ENCODE measurements at regions of chr1 and their contacts with region 1.

Region 1: DNA sequence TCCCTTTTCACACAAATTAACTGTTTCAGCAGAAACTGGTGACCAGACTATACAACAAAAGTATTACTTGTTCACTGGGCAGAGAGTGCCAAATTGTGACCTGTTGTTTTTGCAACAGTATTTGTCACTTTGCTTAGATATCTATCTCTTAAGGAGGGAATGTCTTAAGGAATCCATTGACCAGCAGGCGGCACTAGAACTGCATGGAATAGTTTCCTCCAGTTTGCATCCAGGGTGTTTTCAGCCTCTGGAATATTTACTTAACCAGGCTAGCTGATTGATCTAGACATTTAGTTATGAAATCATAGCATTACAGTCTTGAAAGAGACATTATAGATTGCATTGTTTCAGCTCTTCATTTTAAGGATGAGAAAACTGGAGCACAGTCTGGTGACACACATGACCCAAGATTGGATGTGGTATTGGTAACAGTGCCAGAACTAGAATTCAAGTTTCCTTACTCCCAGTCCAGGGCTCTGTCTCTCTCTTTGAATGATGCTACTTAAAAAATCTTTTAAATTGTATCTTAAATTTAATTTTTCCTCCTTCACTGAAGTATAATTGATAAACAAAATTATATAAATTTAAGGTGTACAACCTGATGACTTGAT is 16.9 kb downstream of the RPTN start:
- DNase-seq: peak; percentile 94
- H3K4me3 Mint-ChIP-seq: no peak overlapping the region
- H3K27ac Mint-ChIP-seq: no peak overlapping the region
- H3K4me1 Mint-ChIP-seq: peaks cover 8% of the 10 kb centered on the region
- H3K27me3 Mint-ChIP-seq: peaks cover 8% of the 10 kb centered on the region
- CTCF ChIP-seq: peak; percentile 93

Region 2: GRCh38 chr1:151898513-151898991 is 243.5 kb before region 1 on chr1:
- CTCF ChIA-PET with region 1: no interaction called
- POLR2A ChIA-PET with region 1: no interaction called
- intact Hi-C with region 1: no loop called
- DNase-seq: no peak
- H3K4me3 Mint-ChIP-seq: no peak overlapping the region
- H3K27ac Mint-ChIP-seq: no peak overlapping the region
- H3K4me1 Mint-ChIP-seq: peaks cover 10% of the 10 kb centered on the region
- H3K27me3 Mint-ChIP-seq: no peaks in the 10 kb centered on the region
- CTCF ChIP-seq: no peak

Region 3: GRCh38 chr1:151934048-151934493 is 208.0 kb before region 1 on chr1:
- CTCF ChIA-PET with region 1: no interaction called
- POLR2A ChIA-PET with region 1: interaction called, 3 read pairs
- intact Hi-C with region 1: loop called (anchors 5 kb)
- DNase-seq: peak; percentile 82
- H3K4me3 Mint-ChIP-seq: no peak overlapping the region
- H3K27ac Mint-ChIP-seq: no peak overlapping the region
- H3K4me1 Mint-ChIP-seq: peaks cover 11% of the 10 kb centered on the region
- H3K27me3 Mint-ChIP-seq: no peaks in the 10 kb centered on the region
- CTCF ChIP-seq: peak; percentile 96

Region 4: GRCh38 chr1:152061952-152062351 is 80.1 kb before region 1 on chr1:
- CTCF ChIA-PET with region 1: interaction called, 11 read pairs
- POLR2A ChIA-PET with region 1: no interaction called
- intact Hi-C with region 1: no loop called
- DNase-seq: no peak
- H3K4me3 Mint-ChIP-seq: no peak overlapping the region
- H3K27ac Mint-ChIP-seq: no peak overlapping the region
- H3K4me1 Mint-ChIP-seq: no peaks in the 10 kb centered on the region
- H3K27me3 Mint-ChIP-seq: peaks cover 17% of the 10 kb centered on the region
- CTCF ChIP-seq: no peak

Region 5: GRCh38 chr1:152078831-152079441 is 63.1 kb before region 1 on chr1:
- CTCF ChIA-PET with region 1: no interaction called
- POLR2A ChIA-PET with region 1: no interaction called
- intact Hi-C with region 1: no loop called
- DNase-seq: no peak
- H3K4me3 Mint-ChIP-seq: no peak overlapping the region
- H3K27ac Mint-ChIP-seq: no peak overlapping the region
- H3K4me1 Mint-ChIP-seq: no peaks in the 10 kb centered on the region
- H3K27me3 Mint-ChIP-seq: peaks cover 37% of the 10 kb centered on the region
- CTCF ChIP-seq: no peak

Region 6: GRCh38 chr1:152127670-152128069 is 14.4 kb before region 1 on chr1:
- CTCF ChIA-PET with region 1: interaction called, 20 read pairs
- POLR2A ChIA-PET with region 1: interaction called, 4 read pairs
- intact Hi-C with region 1: no loop called
- DNase-seq: no peak
- H3K4me3 Mint-ChIP-seq: no peak overlapping the region
- H3K27ac Mint-ChIP-seq: no peak overlapping the region
- H3K4me1 Mint-ChIP-seq: no peaks in the 10 kb centered on the region
- H3K27me3 Mint-ChIP-seq: no peaks in the 10 kb centered on the region
- CTCF ChIP-seq: no peak

Region 7: GRCh38 chr1:152167835-152168519 is 25.9 kb after region 1 on chr1:
- CTCF ChIA-PET with region 1: interaction called, 26 read pairs
- POLR2A ChIA-PET with region 1: interaction called, 171 read pairs
- intact Hi-C with region 1: no loop called
- DNase-seq: peak; percentile 100
- H3K4me3 Mint-ChIP-seq: peak overlapping the region; percentile 49
- H3K27ac Mint-ChIP-seq: peak overlapping the region; percentile 99
- H3K4me1 Mint-ChIP-seq: peaks cover 70% of the 10 kb centered on the region
- H3K27me3 Mint-ChIP-seq: no peaks in the 10 kb centered on the region
- CTCF ChIP-seq: no peak

Region 8: GRCh38 chr1:152189657-152190442 is 47.8 kb after region 1 on chr1:
- CTCF ChIA-PET with region 1: interaction called, 276 read pairs
- POLR2A ChIA-PET with region 1: interaction called, 132 read pairs
- intact Hi-C with region 1: loop called (anchors 1 kb)
- DNase-seq: peak; percentile 90
- H3K4me3 Mint-ChIP-seq: peak overlapping the region; percentile 60
- H3K27ac Mint-ChIP-seq: peak overlapping the region; percentile 1
- H3K4me1 Mint-ChIP-seq: peaks cover 41% of the 10 kb centered on the region
- H3K27me3 Mint-ChIP-seq: peaks cover 11% of the 10 kb centered on the region
- CTCF ChIP-seq: peak; percentile 91

Region 9: DNA sequence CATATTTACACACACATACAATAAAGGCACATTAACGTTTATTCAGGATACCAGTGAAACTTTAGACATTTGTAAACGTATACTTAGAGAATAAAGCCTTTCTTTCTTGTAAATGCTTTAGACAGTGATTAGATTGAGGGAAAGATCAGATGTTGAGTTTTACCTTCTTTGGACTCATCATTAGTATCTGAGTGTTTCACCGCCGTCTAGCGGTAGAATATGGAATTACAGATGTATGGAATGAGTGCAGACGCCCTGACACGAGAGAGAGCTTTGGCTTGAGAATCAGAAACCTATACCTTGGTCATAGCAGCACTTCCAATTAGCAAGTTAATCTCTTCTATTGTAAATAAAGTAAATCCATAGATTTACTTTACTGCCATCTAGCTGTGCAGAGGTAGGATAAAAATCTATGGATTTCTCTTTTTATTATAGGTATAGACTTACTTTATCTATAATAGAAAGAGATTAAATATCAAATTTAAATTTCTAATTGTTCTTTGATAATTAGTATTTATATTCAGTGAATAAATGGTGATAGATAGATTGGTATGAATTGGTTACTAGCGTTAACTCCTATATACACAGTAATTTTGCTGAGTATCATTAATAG is 205.1 kb after region 1 on chr1:
- CTCF ChIA-PET with region 1: interaction called, 9 read pairs
- POLR2A ChIA-PET with region 1: no interaction called
- intact Hi-C with region 1: loop called (anchors 2 kb)
- DNase-seq: peak; percentile 90
- H3K4me3 Mint-ChIP-seq: no peak overlapping the region
- H3K27ac Mint-ChIP-seq: no peak overlapping the region
- H3K4me1 Mint-ChIP-seq: no peaks in the 10 kb centered on the region
- H3K27me3 Mint-ChIP-seq: peaks cover 43% of the 10 kb centered on the region
- CTCF ChIP-seq: peak; percentile 98

Measured in MCF 10A (cell line).